ENCODE measurements at regions of chr2 and their contacts with region 1.

Region 1: DNA sequence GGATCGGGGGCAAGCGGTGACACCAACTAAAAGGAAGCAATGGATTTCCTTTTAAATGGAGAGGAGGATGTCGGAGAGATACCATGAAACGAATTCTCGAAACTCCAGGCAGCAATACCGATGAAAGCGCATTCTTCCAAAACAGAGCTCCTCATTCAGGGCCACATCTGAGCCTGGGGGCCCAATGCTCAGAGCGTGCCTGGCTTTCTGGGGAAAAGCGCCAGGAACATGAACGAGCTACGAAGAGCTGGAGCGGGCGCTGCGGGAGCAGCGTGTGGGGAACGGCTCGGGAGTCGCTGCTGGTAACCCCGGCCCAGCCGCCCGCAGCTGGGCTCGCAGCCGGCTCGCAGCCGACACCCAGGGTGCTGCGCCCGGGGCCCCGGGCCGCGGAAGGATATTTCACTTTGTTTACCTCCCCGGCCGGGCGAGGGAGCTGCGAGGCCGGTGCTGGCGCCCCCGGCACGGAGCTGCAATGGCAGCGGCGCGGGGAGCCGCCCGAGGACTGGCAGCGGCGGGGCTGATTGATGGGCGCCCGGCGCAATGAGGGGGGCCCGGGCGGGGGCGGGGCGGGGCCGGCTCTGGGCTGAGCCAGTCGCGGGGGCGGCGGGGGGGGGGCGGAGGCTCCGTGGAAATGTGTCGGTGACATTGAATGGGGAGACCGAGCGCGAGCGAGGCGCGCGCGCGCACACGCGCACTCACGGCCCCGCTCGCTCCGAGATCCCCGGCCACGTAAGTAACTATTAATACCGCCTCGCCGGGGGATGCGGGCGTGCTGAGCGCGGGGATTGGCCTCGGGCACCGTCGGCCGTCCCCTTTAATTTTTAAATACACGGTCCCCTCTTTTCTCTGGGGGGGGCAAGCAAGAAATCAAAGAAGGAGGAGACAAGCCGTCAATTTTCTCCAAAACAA is at the start of gene TRIB2:
- DNase-seq: peak; percentile 60 to 71
- H3K4me3 ChIP-seq: peak within 1 kb of the TSS; percentile 39
- H3K4me3 Mint-ChIP-seq: peak within 1 kb of the TSS; percentile 71
- H3K27ac Mint-ChIP-seq: no peak within 1 kb of the TSS
- H3K4me1 ChIP-seq: 0 out of 2 replicates have a peak, but pooled peaks cover 5% of the 10 kb centered on the region
- H3K4me1 Mint-ChIP-seq: no peaks in the 10 kb centered on the region
- H3K27me3 ChIP-seq: peaks cover 4% of the 10 kb centered on the region
- H3K27me3 Mint-ChIP-seq: peaks cover 25% of the 10 kb centered on the region
- CTCF ChIP-seq: no peak
- total RNA-seq, gene TRIB2: 2.9 and 3.6 TPM in 2 replicates

Region 2: GRCh38 chr2:11829947-11830707 is 886.4 kb before region 1 on chr2:
- CTCF ChIA-PET with region 1: no interaction called
- POLR2A ChIA-PET with region 1: no interaction called
- intact Hi-C with region 1: loop called (anchors 2 kb)
- DNase-seq: peak; percentile 60 to 73
- H3K4me3 ChIP-seq: no peak overlapping the region
- H3K4me3 Mint-ChIP-seq: peak overlapping the region; percentile 55
- H3K27ac Mint-ChIP-seq: no peak overlapping the region
- H3K4me1 ChIP-seq: no peaks in the 10 kb centered on the region
- H3K4me1 Mint-ChIP-seq: no peaks in the 10 kb centered on the region
- H3K27me3 ChIP-seq: no peaks in the 10 kb centered on the region
- H3K27me3 Mint-ChIP-seq: no peaks in the 10 kb centered on the region
- CTCF ChIP-seq: peak in 1 of 2 experiments; percentile 33

Region 3: DNA sequence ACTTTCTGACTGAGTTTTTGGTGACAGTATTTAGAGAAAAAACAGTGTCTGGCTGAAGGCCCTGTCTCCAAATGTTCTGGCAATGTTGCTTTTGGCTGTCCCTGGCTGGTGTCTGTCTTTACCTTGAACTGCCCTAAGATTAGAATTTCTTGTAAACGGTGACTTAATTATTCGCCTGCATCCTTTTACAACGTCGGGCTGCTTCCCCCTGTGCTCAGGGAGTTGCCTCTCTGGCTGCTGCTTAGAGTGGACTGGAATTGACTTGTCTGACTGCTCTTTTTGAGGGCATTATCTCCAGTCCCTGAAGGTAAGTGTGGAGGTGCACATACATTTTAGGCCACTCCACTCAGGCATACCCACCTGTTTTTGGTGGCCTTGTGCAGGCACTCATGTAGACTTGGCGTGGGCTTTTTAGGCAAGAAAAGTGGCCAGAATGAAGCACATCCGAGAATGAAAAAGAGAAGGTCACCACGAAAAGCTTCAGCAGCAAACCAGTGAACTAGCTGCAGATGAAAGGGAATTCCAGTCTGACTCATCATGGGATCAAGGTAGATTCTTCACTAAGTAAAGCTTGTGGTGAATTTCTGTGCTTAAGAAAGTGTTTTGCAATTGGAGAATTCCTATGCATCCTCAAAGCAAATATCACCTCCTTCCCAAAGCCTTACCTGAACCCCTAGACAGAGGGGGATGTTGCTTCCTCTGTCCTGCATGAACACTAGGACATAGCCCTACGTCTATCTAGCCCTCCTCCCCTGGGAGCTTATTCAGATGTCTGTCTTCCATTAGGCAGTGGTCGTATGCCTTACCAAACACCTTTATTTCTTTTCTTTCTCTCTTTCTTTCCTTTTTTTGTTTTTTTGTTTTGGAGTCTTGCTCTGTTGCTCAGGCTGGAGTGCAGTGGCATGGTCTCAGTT is 230.1 kb before region 1 on chr2:
- CTCF ChIA-PET with region 1: no interaction called
- POLR2A ChIA-PET with region 1: no interaction called
- intact Hi-C with region 1: loop called (anchors 5 kb)
- DNase-seq: peak in 1 of 2 experiments; percentile 47
- H3K4me3 ChIP-seq: no peak overlapping the region
- H3K4me3 Mint-ChIP-seq: no peak overlapping the region
- H3K27ac Mint-ChIP-seq: peak overlapping the region; percentile 60
- H3K4me1 ChIP-seq: peaks cover 24% of the 10 kb centered on the region
- H3K4me1 Mint-ChIP-seq: peaks cover 19% of the 10 kb centered on the region
- H3K27me3 ChIP-seq: no peaks in the 10 kb centered on the region
- H3K27me3 Mint-ChIP-seq: no peaks in the 10 kb centered on the region
- CTCF ChIP-seq: no peak

Region 4: GRCh38 chr2:12534646-12535263 is 181.8 kb before region 1 on chr2:
- CTCF ChIA-PET with region 1: no interaction called
- POLR2A ChIA-PET with region 1: no interaction called
- intact Hi-C with region 1: loop called (anchors 5 kb)
- DNase-seq: no peak
- H3K4me3 ChIP-seq: no peak overlapping the region
- H3K4me3 Mint-ChIP-seq: no peak overlapping the region
- H3K27ac Mint-ChIP-seq: peak overlapping the region; percentile 33
- H3K4me1 ChIP-seq: peaks cover 25% of the 10 kb centered on the region
- H3K4me1 Mint-ChIP-seq: peaks cover 37% of the 10 kb centered on the region
- H3K27me3 ChIP-seq: no peaks in the 10 kb centered on the region
- H3K27me3 Mint-ChIP-seq: no peaks in the 10 kb centered on the region
- CTCF ChIP-seq: no peak

Region 5: DNA sequence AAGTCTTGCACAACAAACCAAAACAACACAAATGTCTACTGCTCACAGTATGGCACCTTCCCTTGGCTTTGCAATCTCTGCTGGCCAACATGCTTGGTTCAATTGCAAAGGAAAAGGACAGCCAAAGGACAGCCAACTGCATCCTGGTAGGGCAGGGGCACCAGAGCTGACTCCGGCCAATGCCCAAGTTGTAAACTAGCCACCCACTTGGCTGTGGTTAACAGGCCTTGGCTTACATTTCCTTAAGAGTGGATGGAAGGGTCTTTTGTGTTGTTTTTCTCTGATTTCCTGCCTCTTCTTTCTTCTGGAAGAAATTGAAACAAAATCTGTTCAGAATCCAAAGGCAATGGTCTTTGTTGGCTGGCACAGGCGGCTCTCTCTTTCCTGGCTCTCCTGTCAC is 118.9 kb before region 1 on chr2:
- CTCF ChIA-PET with region 1: no interaction called
- POLR2A ChIA-PET with region 1: no interaction called
- intact Hi-C with region 1: no loop called
- DNase-seq: no peak
- H3K4me3 ChIP-seq: no peak overlapping the region
- H3K4me3 Mint-ChIP-seq: no peak overlapping the region
- H3K27ac Mint-ChIP-seq: no peak overlapping the region
- H3K4me1 ChIP-seq: no peaks in the 10 kb centered on the region
- H3K4me1 Mint-ChIP-seq: no peaks in the 10 kb centered on the region
- H3K27me3 ChIP-seq: no peaks in the 10 kb centered on the region
- H3K27me3 Mint-ChIP-seq: peaks cover 5% of the 10 kb centered on the region
- CTCF ChIP-seq: no peak

Region 6: DNA sequence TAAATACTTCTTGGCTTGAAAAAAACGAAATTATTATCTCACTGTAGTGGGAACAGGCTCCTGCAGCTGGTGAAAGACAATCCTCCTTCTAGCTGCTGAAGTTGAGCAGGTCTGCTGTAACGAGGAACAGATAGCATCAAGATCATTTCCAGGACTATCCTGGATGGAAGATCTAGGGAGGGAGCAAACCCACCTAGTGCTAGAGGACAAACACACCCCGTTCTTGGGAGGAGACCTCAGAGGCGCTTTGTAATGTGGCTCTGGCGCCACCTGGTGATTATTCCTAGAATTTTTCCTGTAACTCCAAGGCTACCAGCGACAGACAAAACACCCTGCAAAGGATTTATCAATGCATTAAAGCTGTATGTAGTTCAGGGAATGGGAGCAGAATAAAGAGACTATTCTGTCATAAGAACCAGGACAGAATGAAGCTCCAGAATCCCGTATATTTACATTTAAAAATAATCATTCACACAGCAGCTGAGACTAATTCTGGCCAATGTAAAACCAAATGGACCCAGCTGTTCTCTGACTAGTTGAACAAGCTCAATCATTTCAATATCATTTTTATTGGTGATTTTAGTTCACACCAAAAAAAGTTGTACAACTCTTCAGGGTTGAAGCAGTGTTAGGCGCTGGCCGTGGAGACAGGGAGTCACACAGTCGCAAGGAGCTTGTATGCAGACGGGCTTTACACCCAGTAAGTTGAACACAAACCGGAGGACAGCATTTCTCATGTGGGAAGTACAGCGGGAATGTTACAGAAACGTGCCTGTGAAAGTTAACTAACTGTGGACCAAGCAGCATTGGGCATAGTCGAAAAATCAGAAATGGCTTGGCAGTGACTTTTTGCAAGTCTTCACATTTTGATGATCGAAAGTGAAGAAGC is 290.5 kb after region 1 on chr2:
- CTCF ChIA-PET with region 1: no interaction called
- POLR2A ChIA-PET with region 1: no interaction called
- intact Hi-C with region 1: loop called (anchors 5 kb)
- DNase-seq: peak; percentile 58 to 70
- H3K4me3 ChIP-seq: no peak overlapping the region
- H3K4me3 Mint-ChIP-seq: no peak overlapping the region
- H3K27ac Mint-ChIP-seq: no peak overlapping the region
- H3K4me1 ChIP-seq: no peaks in the 10 kb centered on the region
- H3K4me1 Mint-ChIP-seq: no peaks in the 10 kb centered on the region
- H3K27me3 ChIP-seq: no peaks in the 10 kb centered on the region
- H3K27me3 Mint-ChIP-seq: peaks cover 10% of the 10 kb centered on the region
- CTCF ChIP-seq: peak; percentile 65 to 89

Region 7: GRCh38 chr2:14297345-14297744 is 1580.8 kb after region 1 on chr2:
- CTCF ChIA-PET with region 1: no interaction called
- POLR2A ChIA-PET with region 1: no interaction called
- intact Hi-C with region 1: no loop called
- DNase-seq: no peak
- H3K4me3 ChIP-seq: no peak overlapping the region
- H3K4me3 Mint-ChIP-seq: no peak overlapping the region
- H3K27ac Mint-ChIP-seq: no peak overlapping the region
- H3K4me1 ChIP-seq: no peaks in the 10 kb centered on the region
- H3K4me1 Mint-ChIP-seq: no peaks in the 10 kb centered on the region
- H3K27me3 ChIP-seq: no peaks in the 10 kb centered on the region
- H3K27me3 Mint-ChIP-seq: no peaks in the 10 kb centered on the region
- CTCF ChIP-seq: no peak